ENCODE measurements at regions of chr17 and their contacts with region 1.

Region 1: DNA sequence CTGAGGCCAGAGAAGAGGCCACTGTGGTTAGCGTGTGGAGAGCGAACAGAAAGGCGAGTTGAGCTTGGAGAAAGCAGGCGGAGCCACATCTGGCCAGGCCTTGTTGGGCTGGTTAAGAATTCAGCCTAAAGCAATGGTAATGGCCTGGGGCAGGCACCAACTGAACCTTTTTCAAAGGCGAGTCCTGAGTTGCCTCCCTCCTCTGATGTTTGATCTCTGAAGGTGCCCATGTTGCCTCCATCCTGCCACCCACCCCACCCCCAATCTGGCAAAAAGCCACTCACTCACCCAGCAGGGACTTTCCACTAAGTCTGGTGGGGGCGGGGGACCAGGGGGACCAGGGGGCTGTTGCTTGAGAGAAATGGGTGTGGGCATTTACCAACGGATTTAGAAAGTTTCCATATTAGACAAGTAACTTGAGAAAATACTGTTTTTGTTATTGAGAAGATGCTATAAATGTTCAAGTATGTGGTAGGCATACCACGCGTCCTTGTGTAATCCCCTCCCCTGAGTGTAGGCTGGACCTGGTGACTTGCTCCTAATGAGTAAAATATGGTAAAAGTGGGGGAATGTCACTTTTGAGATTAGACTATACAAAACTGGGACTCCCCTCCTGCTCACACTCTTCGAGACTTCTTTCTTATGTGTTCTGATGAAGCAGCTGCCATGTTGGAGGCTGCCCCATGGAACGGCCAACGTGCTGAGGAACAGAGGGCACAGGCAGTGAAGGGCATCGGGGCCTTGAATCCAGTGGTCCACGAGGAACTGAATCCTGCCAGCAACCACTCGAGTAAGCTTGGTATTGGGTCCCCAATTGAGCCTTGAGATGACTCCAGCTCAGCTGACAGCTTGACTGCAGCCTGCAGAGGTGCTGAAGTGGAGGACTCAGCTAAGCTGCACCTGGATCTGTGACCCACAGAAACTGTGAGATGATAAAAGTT is 29.9 kb upstream of the TNS4 start:
- DNase-seq: peak in 1 of 2 donors; percentile 33
- H3K4me3 ChIP-seq: no peak overlapping the region
- H3K27ac ChIP-seq: no peak overlapping the region
- H3K4me1 ChIP-seq: peaks cover 0 to 7% of the 10 kb centered on the region in 2 donors
- H3K27me3 ChIP-seq: no peaks in the 10 kb centered on the region
- CTCF ChIP-seq: no peak

Region 2: DNA sequence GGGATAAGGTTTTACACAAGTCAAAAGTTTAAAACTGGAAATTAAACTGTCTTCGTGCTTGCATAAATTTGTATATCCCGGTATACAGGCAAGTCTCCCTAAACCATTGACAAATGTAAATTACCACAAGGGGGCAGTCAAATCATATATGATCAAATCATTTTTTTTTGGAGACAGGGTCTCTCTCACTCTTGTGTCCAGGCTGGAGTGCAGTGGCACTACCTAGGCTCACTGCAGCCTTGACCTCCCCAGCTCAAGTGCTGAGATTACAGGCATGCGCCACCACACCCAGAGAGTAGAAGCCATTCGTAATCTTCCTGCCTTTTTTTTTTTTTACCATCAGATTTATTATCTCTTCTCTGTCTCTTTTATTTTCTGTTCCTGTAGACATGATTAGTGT is 132.1 kb before region 1 on chr17:
- intact Hi-C with region 1: loop called (anchors 2 kb)
- DNase-seq: no peak
- H3K4me3 ChIP-seq: no peak overlapping the region
- H3K27ac ChIP-seq: no peak overlapping the region
- H3K4me1 ChIP-seq: no peaks in the 10 kb centered on the region
- H3K27me3 ChIP-seq: no peaks in the 10 kb centered on the region
- CTCF ChIP-seq: peak; percentile 41 to 55 (median 43)

Region 3: DNA sequence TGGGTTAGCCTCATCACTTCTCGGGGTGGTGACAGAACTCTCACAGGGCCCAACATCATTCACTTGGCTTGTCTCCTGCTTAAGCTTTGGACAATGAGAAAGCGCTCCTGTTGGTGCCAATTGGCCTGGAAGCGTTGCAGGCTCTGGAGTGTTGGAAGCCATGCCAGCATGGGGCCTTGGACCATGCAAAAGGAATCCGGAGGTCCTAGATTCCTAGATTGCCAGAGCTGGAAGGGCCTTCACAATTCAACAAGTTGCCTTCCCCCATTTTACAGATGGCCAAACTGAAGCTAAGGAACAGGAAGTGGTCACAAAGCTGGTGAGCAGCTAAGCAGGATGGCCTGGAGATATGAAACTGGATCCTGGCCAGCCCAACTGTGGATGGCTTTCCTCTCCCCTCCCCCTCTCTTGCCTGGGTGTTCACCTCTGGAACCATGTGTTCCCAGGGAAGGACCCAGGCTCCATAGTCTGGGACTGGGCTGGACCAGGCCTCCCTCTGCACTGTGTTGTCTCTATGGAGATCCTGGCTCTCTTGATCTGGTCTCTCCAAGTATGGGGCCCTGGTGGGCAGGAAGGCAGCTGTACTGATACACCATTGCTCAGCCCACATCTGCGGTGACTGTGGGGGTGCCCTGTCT is 94.1 kb before region 1 on chr17:
- intact Hi-C with region 1: loop called (anchors 1 kb)
- DNase-seq: no peak
- H3K4me3 ChIP-seq: no peak overlapping the region
- H3K27ac ChIP-seq: no peak overlapping the region
- H3K4me1 ChIP-seq: peaks cover 0 to under 1% of the 10 kb centered on the region in 2 donors
- H3K27me3 ChIP-seq: no peaks in the 10 kb centered on the region
- CTCF ChIP-seq: no peak

Region 4: DNA sequence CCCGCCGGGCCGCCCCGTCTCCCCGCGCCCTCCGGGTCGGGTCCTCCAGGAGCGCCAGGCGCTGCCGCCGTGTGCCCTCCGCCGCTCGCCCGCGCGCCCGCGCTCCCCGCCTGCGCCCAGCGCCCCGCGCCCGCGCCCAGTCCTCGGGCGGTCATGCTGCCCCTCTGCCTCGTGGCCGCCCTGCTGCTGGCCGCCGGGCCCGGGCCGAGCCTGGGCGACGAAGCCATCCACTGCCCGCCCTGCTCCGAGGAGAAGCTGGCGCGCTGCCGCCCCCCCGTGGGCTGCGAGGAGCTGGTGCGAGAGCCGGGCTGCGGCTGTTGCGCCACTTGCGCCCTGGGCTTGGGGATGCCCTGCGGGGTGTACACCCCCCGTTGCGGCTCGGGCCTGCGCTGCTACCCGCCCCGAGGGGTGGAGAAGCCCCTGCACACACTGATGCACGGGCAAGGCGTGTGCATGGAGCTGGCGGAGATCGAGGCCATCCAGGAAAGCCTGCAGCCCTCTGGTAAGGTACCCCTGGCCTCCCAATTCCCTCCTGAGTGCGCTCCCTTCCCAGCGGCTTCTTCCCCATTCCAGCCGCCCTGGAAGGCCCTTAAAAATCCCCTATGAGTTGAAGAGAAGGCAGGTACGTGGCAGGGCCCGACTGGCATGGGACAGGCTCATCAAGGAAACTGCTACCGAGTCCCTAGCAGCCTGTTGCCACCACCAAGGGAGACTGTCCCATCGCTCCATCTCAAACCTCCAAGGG is 87.6 kb before region 1 on chr17:
- intact Hi-C with region 1: loop called (anchors 1 kb)
- DNase-seq: peak in 1 of 2 donors; percentile 88
- H3K4me3 ChIP-seq: peak overlapping the region; percentile 64 to 90
- H3K27ac ChIP-seq: peak overlapping the region; percentile 89 to 92
- H3K4me1 ChIP-seq: peaks cover 14 to 44% of the 10 kb centered on the region in 2 donors
- H3K27me3 ChIP-seq: no peaks in the 10 kb centered on the region
- CTCF ChIP-seq: peak in 2 of 3 experiments; percentile 25 to 43

Region 5: GRCh38 chr17:40480501-40481003 is 50.8 kb before region 1 on chr17:
- intact Hi-C with region 1: loop called (anchors 5 kb)
- DNase-seq: no peak
- H3K4me3 ChIP-seq: no peak overlapping the region
- H3K27ac ChIP-seq: no peak overlapping the region
- H3K4me1 ChIP-seq: peaks cover 0 to 4% of the 10 kb centered on the region in 2 donors
- H3K27me3 ChIP-seq: no peaks in the 10 kb centered on the region
- CTCF ChIP-seq: no peak

Measured in ascending aorta (tissue), 2 donors.